CD4-positive, alpha-beta T cell (primary cell): ENCODE measurements at regions of chr1 and their contacts with region 1.

Region 1: DNA sequence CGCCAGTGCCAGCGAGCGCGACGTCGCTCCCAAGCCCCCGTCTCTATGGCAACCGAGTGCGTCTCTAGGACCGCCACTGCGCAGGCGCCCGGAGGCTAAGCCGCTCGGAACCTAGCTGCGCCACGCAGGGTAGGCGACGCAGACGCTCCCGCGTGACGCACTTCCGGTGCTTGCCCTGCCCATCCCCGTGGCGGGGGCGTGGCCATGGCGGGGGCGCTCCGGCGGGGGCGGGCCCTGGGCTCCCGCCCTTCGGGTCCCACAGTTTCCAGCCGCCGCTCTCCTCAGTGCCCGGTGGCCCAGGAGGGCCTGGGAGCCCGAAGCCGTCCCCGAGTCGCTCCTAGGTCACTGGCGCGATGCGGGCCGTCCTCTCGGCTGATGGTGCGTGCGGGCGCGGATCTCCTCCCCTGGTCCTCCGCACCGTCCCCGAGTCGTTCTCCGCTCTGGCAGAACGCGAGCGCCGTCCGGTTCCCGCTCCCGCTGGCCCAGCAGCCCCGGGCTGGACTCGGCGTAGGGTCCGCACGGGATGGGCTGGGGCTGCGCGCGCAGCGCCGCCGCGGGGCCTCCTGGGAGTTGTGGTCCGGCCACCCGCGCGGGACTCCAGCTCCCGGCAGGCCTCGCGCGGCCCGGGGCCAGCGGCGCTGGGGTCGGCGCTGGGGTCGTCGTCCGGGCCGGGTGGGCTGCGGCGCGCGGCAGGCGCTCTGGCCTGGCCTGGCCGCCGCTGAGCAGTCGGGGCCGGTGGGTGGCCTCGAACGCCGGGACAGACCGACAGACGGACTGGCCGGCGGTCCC is at the start of gene MIB2:
- DNase-seq: peak; percentile 94 to 100 (median 98)
- ATAC-seq: peak; percentile 76
- H3K4me3 ChIP-seq: peak within 1 kb of the TSS; percentile 87
- H3K4me3 Mint-ChIP-seq: peak within 1 kb of the TSS; percentile 97
- H3K27ac ChIP-seq: peak within 1 kb of the TSS; percentile 99 to 100
- H3K27ac Mint-ChIP-seq: peak within 1 kb of the TSS; percentile 100
- H3K4me1 ChIP-seq: peaks cover 32% of the 10 kb centered on the region
- H3K4me1 Mint-ChIP-seq: peaks cover 28% of the 10 kb centered on the region
- H3K27me3 ChIP-seq: no peaks in the 10 kb centered on the region
- H3K27me3 Mint-ChIP-seq: no peaks in the 10 kb centered on the region
- CTCF ChIP-seq: no peak
- total RNA-seq, gene MIB2: 58.3 to 59.4 TPM

Region 2: DNA sequence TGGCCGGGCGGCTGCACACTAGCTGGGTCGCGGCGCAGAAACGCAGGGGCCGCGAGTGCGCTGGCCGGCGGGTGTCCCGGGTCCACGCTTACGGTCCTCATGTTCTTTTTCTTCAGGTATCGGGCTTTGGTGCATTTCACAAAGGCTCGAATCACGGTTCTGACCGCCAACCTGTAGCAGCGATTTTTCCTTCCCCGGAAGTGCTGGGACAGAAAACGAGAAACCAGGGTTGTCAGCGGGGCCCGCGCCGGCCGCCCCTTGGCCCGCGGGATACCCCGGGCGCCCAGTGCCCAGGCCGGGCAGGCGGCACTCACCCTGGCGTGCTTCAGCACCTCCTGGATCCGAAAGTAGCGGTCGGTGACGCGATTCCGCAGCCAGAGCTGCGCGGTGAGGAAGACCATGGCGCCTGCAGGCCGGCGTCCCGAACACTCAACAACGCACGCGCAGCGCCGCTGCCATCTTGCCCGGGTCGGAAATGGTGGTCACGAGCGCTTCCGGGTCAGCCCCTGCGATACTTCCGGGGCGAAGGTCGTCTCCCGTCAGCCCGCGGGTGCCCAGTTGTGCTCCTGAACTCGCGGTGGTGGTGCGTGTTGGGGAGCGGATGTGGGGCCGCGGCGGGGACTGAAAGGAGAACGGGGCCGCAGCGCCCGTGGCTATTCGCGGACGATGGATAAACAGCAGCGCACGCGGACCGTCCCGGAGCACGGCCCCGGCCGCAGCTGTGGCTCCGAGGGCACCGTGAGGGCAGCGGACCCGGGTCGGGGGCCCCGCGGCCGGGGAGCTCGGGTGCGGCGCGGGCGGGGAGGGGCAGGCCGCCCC is 208.4 kb before region 1 on chr1 and contains the start of gene MRPL20:
- CTCF ChIA-PET with region 1: no interaction called
- POLR2A ChIA-PET with region 1: interaction called, 10 read pairs
- intact Hi-C with region 1: no loop called
- DNase-seq: peak; percentile 93 to 99 (median 95)
- ATAC-seq: peak; percentile 94
- H3K4me3 ChIP-seq: peak within 1 kb of the TSS; percentile 92
- H3K4me3 Mint-ChIP-seq: peak within 1 kb of the TSS; percentile 94
- H3K27ac ChIP-seq: peak within 1 kb of the TSS; percentile 80 to 88
- H3K27ac Mint-ChIP-seq: peak within 1 kb of the TSS; percentile 91
- H3K4me1 ChIP-seq: peaks cover 44% of the 10 kb centered on the region
- H3K4me1 Mint-ChIP-seq: peaks cover 34% of the 10 kb centered on the region
- H3K27me3 ChIP-seq: no peaks in the 10 kb centered on the region
- H3K27me3 Mint-ChIP-seq: no peaks in the 10 kb centered on the region
- CTCF ChIP-seq: no peak
- total RNA-seq, gene MRPL20: 99.9 to 103 TPM

Region 3: DNA sequence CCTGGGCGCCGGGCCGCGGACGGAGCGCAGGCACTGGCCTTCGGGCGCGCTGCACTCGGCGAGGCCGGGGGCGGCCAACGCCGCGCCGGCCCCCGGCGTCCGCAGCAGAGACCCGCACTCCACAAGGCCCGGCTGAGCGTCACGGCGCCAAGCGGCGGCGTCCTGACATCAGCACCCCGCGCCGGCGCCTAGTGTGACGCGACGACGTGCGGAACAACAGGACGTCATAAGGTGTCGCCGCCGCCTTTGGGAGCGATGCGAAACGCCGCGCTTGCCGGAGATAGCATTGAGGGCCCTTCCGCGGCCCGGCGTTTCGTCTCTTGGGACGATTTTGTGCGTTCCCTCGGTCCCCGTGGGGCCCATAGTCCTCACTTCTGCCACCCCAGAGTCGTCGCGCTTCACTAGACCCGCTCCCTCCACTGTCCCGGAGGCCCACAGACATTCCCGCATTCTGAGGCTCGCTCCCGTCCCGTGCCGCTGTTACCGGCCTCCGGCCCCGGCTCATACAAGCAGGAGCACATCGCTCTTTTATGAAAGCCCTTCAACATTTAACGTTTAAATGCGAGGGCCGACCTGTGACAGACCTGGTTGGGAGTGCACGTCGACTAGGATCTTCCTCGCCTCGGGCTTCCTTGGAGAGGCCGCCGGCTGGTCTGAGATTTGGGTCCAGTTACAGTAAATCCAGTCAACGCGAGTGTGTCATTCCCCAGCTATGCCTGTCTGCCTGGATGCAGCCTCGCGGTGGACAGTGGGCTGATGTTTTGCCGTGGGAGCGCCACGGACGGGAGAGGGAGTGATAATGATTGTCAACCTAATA is 40.5 kb before region 1 on chr1 and contains the start of gene SSU72:
- CTCF ChIA-PET with region 1: no interaction called
- POLR2A ChIA-PET with region 1: interaction called, 38 read pairs
- intact Hi-C with region 1: loop called (anchors 1 kb)
- DNase-seq: peak; percentile 89 to 97 (median 91)
- ATAC-seq: peak; percentile 78
- H3K4me3 ChIP-seq: peak within 1 kb of the TSS; percentile 85
- H3K4me3 Mint-ChIP-seq: peak within 1 kb of the TSS; percentile 98
- H3K27ac ChIP-seq: peak within 1 kb of the TSS; percentile 98 to 99
- H3K27ac Mint-ChIP-seq: peak within 1 kb of the TSS; percentile 100
- H3K4me1 ChIP-seq: peaks cover 54% of the 10 kb centered on the region
- H3K4me1 Mint-ChIP-seq: peaks cover 36% of the 10 kb centered on the region
- H3K27me3 ChIP-seq: no peaks in the 10 kb centered on the region
- H3K27me3 Mint-ChIP-seq: no peaks in the 10 kb centered on the region
- CTCF ChIP-seq: no peak
- total RNA-seq, gene SSU72: 95.4 to 101 TPM

Region 4: GRCh38 chr1:1630271-1630964 is 15.0 kb after region 1 on chr1:
- CTCF ChIA-PET with region 1: interaction called, 4 read pairs
- POLR2A ChIA-PET with region 1: interaction called, 137 read pairs
- intact Hi-C with region 1: loop called (anchors 2 kb)
- DNase-seq: peak; percentile 87 to 99 (median 94)
- ATAC-seq: peak; percentile 71
- H3K4me3 ChIP-seq: peak overlapping the region; percentile 20
- H3K4me3 Mint-ChIP-seq: peak overlapping the region; percentile 96
- H3K27ac ChIP-seq: peak overlapping the region in 1 of 2 donors; percentile 46
- H3K27ac Mint-ChIP-seq: peak overlapping the region; percentile 96
- H3K4me1 ChIP-seq: peaks cover 36% of the 10 kb centered on the region
- H3K4me1 Mint-ChIP-seq: peaks cover 9% of the 10 kb centered on the region
- H3K27me3 ChIP-seq: peaks cover 0 to 2% of the 10 kb centered on the region in 2 experiments
- H3K27me3 Mint-ChIP-seq: peaks cover 5% of the 10 kb centered on the region
- CTCF ChIP-seq: no peak